Activated naive CD4-positive, alpha-beta T cell treated with anti-CD3 and anti-CD28 coated beads for 36 hours (primary cell): ENCODE measurements at regions of chr11 and their contacts with region 1.

Region 1: GRCh38 chr11:87037450-87038234 is at the start of gene TMEM135:
- DNase-seq: peak; percentile 95
- H3K4me3 Mint-ChIP-seq: peak within 1 kb of the TSS; percentile 98
- H3K27ac Mint-ChIP-seq: peak within 1 kb of the TSS; percentile 88
- H3K4me1 Mint-ChIP-seq: peaks cover 32% of the 10 kb centered on the region
- H3K27me3 Mint-ChIP-seq: no peaks in the 10 kb centered on the region
- total RNA-seq, gene TMEM135: 21.8 to 24.8 TPM

Region 2: DNA sequence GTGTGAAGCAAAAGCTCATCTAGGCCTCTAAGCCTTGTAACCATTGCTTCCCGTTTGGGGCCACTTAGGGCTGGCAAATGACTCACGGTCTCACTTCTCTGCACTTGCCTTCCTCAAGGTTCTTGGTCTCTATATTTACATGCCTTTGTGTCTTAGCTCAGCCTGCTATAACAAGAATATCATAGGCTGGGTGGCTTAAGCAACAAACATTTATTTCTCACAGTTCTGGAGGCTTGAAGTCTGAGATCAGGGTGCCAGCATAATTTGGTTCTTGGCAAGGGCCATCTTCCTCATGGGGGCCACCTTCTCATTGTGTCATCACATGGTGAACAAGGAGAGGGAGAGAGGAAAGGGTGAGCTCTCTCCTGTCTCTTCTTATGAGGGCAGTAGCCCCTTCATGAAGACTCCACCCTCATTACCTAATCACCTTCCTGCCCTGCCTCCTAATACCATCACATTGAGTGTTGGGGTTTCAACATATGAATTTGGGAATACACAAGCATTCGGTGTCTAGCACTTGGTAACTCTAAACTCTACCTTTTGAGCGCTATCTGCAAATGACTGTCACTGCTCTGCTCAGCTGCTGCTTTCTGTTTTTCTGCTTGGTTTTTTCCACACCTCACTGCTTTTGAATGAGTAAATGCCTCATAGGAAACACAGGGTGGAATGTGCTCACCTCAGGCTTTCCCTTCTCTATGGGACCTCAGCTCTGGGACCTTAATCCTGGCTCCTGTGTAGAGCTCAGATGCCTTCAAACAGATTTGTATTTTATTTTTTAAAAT is 349.1 kb before region 1 on chr11:
- CTCF ChIA-PET with region 1: no interaction called
- intact Hi-C with region 1: loop called (anchors 5 kb)
- DNase-seq: peak; percentile 70
- H3K4me3 Mint-ChIP-seq: no peak overlapping the region
- H3K27ac Mint-ChIP-seq: peak overlapping the region; percentile 90
- H3K4me1 Mint-ChIP-seq: peaks cover 27% of the 10 kb centered on the region
- H3K27me3 Mint-ChIP-seq: peaks cover 2% of the 10 kb centered on the region

Region 3: GRCh38 chr11:86931548-86932258 is 105.9 kb before region 1 on chr11:
- CTCF ChIA-PET with region 1: no interaction called
- intact Hi-C with region 1: no loop called
- DNase-seq: peak; percentile 12
- H3K4me3 Mint-ChIP-seq: no peak overlapping the region
- H3K27ac Mint-ChIP-seq: no peak overlapping the region
- H3K4me1 Mint-ChIP-seq: no peaks in the 10 kb centered on the region
- H3K27me3 Mint-ChIP-seq: no peaks in the 10 kb centered on the region

Region 4: DNA sequence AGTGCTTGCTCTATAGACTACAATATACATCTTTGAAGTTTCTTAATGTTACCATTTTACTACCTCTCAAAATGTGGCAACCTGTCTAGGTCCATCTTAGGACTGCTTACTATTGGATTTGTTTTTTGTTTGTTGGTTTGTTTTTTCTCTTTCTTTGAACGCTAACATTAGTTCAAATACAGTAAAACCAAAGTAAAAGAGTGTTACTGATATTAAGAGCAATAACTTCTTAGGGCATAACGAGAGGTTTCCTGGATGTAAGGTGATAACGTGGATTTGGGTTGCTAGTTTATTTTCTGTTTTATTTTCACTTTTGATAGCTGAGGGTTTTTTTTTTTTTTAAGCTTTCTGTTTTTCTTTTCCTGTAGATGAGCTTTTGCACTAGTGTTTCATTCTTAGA is 43.7 kb after region 1 on chr11:
- CTCF ChIA-PET with region 1: no interaction called
- intact Hi-C with region 1: loop called (anchors 1 kb)
- DNase-seq: no peak
- H3K4me3 Mint-ChIP-seq: peak overlapping the region; percentile 68
- H3K27ac Mint-ChIP-seq: peak overlapping the region; percentile 65
- H3K4me1 Mint-ChIP-seq: peaks cover 19% of the 10 kb centered on the region
- H3K27me3 Mint-ChIP-seq: no peaks in the 10 kb centered on the region

Region 5: GRCh38 chr11:87252869-87253268 is 215.2 kb after region 1 on chr11:
- CTCF ChIA-PET with region 1: no interaction called
- intact Hi-C with region 1: loop called (anchors 1 kb)
- DNase-seq: no peak
- H3K4me3 Mint-ChIP-seq: no peak overlapping the region
- H3K27ac Mint-ChIP-seq: peak overlapping the region; percentile 14
- H3K4me1 Mint-ChIP-seq: peaks cover 29% of the 10 kb centered on the region
- H3K27me3 Mint-ChIP-seq: no peaks in the 10 kb centered on the region

Region 6: GRCh38 chr11:88337181-88337986 is 1299.7 kb after region 1 on chr11 and contains the start of gene CTSC:
- CTCF ChIA-PET with region 1: no interaction called
- intact Hi-C with region 1: loop called (anchors 5 kb)
- DNase-seq: peak; percentile 92
- H3K4me3 Mint-ChIP-seq: peak within 1 kb of the TSS; percentile 99
- H3K27ac Mint-ChIP-seq: peak within 1 kb of the TSS; percentile 73
- H3K4me1 Mint-ChIP-seq: peaks cover 48% of the 10 kb centered on the region
- H3K27me3 Mint-ChIP-seq: no peaks in the 10 kb centered on the region
- total RNA-seq, gene CTSC: 19.1 to 22.2 TPM